MCF 10A (cell line): ENCODE measurements at regions of chr4 and their contacts with region 1.

Region 1: DNA sequence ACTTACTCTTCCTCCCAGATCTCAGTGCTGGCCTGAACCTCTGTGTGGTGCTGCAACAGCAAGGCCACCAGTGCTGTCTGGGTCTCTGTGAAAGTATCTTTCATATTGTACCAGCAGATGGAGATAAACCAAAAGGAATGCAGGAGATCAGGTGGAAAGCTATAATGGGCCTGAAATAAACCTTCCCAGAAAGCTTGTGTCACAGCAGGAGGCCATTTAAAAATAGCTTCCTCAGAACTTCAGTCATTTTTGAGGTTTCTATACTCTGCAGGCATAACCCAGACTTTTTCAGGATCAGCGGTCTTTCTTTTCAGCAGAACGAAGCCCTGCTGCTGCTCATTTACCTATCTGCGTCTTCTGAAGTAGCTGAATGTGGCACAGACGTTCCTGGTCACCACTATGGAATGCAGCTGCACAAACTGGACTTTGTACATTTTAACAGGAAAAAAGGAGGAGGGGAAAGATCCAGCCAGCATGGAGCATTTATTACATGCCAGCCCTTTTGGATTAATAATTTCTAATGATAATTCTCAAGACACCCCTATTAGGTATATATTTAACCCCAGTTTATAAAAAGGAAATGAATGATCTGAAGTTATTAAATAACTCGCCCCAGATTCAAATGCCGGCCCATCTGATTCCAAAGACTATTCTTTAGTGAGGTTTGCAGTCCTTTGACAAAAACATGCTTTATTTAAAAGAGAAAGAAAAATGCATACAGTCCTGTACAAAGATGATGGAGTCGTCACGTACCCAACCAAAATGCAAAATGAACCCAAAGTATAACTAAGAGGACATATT is 119.7 kb downstream of the NFKB1 start:
- DNase-seq: peak; percentile 77
- H3K4me3 Mint-ChIP-seq: peak overlapping the region; percentile 44
- H3K27ac Mint-ChIP-seq: no peak overlapping the region
- H3K4me1 Mint-ChIP-seq: peaks cover 8% of the 10 kb centered on the region
- H3K27me3 Mint-ChIP-seq: no peaks in the 10 kb centered on the region
- CTCF ChIP-seq: peak; percentile 59

Region 2: GRCh38 chr4:102610007-102610406 is 10.9 kb before region 1 on chr4:
- CTCF ChIA-PET with region 1: interaction called, 18 read pairs
- POLR2A ChIA-PET with region 1: interaction called, 5 read pairs
- intact Hi-C with region 1: no loop called
- DNase-seq: no peak
- H3K4me3 Mint-ChIP-seq: no peak overlapping the region
- H3K27ac Mint-ChIP-seq: peak overlapping the region; percentile 16
- H3K4me1 Mint-ChIP-seq: peaks cover 16% of the 10 kb centered on the region
- H3K27me3 Mint-ChIP-seq: no peaks in the 10 kb centered on the region
- CTCF ChIP-seq: peak; percentile 16

Region 3: DNA sequence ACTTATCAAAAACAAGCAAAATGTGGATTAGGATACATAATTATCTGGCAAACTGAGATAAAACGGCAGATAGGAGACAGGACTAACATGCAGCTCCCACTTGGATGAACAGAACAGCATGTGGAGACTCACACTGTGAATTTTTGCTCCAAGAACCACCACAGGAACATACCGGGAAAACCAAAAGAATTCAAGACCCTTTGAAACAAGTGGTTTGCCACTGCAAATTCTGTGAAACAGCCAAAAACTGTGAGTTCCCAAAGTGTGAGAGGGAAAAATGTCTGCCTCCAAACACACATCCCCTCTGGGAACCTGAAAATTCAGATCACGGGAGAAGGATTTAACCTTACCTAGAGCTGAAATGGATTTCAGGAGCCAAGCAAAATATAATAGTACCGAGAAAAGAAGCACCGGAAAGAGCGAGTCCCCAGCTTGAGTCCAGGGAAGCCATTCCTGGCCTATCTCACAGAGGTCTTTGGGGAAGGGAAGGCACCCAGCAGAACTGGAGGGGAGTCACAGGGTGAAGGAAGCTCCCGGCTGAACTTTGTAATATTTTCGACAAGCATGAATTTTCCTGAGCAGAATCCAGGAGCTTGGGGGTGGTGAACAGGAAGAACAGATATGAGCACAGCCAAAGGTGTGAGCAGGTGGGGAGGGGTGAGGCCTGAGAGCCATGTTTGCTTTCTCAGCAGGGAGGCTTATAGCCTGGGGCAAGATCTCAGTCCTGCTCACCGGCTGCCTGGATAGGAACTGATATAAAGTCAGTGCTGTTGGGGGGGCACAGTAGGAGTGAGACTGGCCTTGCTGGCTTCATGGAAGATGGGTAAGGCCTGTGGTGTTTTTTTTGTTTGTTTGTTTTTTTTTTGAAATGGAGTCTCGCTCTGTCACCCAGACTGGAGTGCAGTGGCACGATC is 116.0 kb after region 1 on chr4:
- CTCF ChIA-PET with region 1: no interaction called
- POLR2A ChIA-PET with region 1: no interaction called
- intact Hi-C with region 1: no loop called
- DNase-seq: peak; percentile 62
- H3K4me3 Mint-ChIP-seq: no peak overlapping the region
- H3K27ac Mint-ChIP-seq: peak overlapping the region; percentile 10
- H3K4me1 Mint-ChIP-seq: peaks cover 16% of the 10 kb centered on the region
- H3K27me3 Mint-ChIP-seq: no peaks in the 10 kb centered on the region
- CTCF ChIP-seq: no peak

Region 4: GRCh38 chr4:102760645-102761295 is 139.9 kb after region 1 on chr4 and contains the start of gene MANBA:
- CTCF ChIA-PET with region 1: interaction called, 5 read pairs
- POLR2A ChIA-PET with region 1: interaction called, 4 read pairs
- intact Hi-C with region 1: loop called (anchors 5 kb)
- DNase-seq: peak; percentile 84
- H3K4me3 Mint-ChIP-seq: peak within 1 kb of the TSS; percentile 90
- H3K27ac Mint-ChIP-seq: peak within 1 kb of the TSS; percentile 37
- H3K4me1 Mint-ChIP-seq: peaks cover 17% of the 10 kb centered on the region
- H3K27me3 Mint-ChIP-seq: no peaks in the 10 kb centered on the region
- CTCF ChIP-seq: no peak
- total RNA-seq, gene MANBA: 11.2 and 13.2 TPM in 2 replicates

Region 5: DNA sequence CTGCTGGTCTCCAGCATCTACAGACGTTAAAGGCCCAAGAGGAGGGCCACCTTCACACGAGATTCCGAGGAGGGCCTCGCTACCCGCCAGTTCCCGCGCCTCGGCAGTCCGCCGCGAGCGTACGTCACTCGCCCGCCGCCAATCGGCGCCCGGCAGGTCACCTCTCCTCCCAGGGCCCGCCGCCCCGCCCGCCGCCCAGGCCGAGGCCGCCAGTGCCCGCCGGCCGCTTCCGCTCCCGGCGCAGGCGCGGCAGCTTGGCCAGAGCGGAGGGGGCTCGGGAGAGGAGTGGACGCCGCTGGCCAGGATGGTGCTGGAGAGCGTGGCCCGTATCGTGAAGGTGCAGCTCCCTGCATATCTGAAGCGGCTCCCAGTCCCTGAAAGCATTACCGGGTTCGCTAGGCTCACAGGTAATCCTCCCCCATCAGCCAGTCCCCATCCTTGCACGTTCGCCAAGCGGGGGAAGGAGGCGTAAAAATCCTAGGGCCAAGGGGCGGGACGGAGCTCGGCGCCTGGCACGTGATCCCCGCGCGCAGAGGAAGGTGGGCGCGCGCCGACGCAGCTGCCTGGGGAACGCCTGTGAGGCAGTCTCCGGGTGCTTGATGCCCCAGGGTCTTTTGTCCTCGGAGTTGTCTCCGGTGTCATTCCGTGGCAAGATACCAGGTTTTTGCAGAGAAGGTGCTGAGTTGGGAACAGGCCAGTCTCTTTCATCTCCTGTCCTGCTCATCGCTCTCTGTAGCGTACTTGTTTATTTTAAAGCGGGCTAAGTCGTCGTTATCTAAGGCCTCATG is 248.1 kb after region 1 on chr4 and contains the start of gene CISD2:
- CTCF ChIA-PET with region 1: interaction called, 6 read pairs
- POLR2A ChIA-PET with region 1: interaction called, 7 read pairs
- intact Hi-C with region 1: loop called (anchors 5 kb)
- DNase-seq: peak; percentile 95
- H3K4me3 Mint-ChIP-seq: peak within 1 kb of the TSS; percentile 98
- H3K27ac Mint-ChIP-seq: peak within 1 kb of the TSS; percentile 98
- H3K4me1 Mint-ChIP-seq: peaks cover 21% of the 10 kb centered on the region
- H3K27me3 Mint-ChIP-seq: no peaks in the 10 kb centered on the region
- CTCF ChIP-seq: no peak
- total RNA-seq, gene CISD2: 35.5 and 35.8 TPM in 2 replicates

Region 6: GRCh38 chr4:103091601-103092223 is 470.8 kb after region 1 on chr4:
- CTCF ChIA-PET with region 1: interaction called, 68 read pairs
- POLR2A ChIA-PET with region 1: interaction called, 9 read pairs
- intact Hi-C with region 1: loop called (anchors 1 kb)
- DNase-seq: peak; percentile 67
- H3K4me3 Mint-ChIP-seq: no peak overlapping the region
- H3K27ac Mint-ChIP-seq: no peak overlapping the region
- H3K4me1 Mint-ChIP-seq: peaks cover 14% of the 10 kb centered on the region
- H3K27me3 Mint-ChIP-seq: no peaks in the 10 kb centered on the region
- CTCF ChIP-seq: peak; percentile 60